Naive thymus-derived CD4-positive, alpha-beta T cell (primary cell): ENCODE measurements at regions of chr5 and their contacts with region 1.

Region 1: GRCh38 chr5:172958331-172959046 is 735 bp upstream of the RPL26L1 start:
- DNase-seq: peak in 7 of 9 donors; percentile 13 to 76 (median 57)
- ATAC-seq: peak; percentile 84
- H3K4me3 ChIP-seq: peak overlapping the region; percentile 90
- H3K4me3 Mint-ChIP-seq: peak overlapping the region; percentile 88 to 98 (median 97)
- H3K27ac ChIP-seq: peak overlapping the region; percentile 95
- H3K27ac Mint-ChIP-seq: peak overlapping the region; percentile 94 to 99 (median 98)
- H3K4me1 ChIP-seq: peaks cover 9 to 10% of the 10 kb centered on the region in 2 donors
- H3K4me1 Mint-ChIP-seq: peaks cover 18 to 45% (median 37%) of the 10 kb centered on the region in 7 donors
- H3K27me3 ChIP-seq: no peaks in the 10 kb centered on the region
- H3K27me3 Mint-ChIP-seq: peaks cover 0 to 4% (median 0%) of the 10 kb centered on the region in 5 donors

Region 2: GRCh38 chr5:172179361-172179989 is 779.0 kb before region 1 on chr5:
- CTCF ChIA-PET with region 1: no interaction called
- POLR2A ChIA-PET with region 1: no interaction called
- intact Hi-C with region 1: loop called in 1 of 2 experiments (anchors 2 kb)
- DNase-seq: peak in 8 of 9 donors; percentile 40 to 68 (median 50)
- ATAC-seq: peak; percentile 8
- H3K4me3 ChIP-seq: peak overlapping the region; percentile 76
- H3K4me3 Mint-ChIP-seq: peak overlapping the region; percentile 78 to 99 (median 90)
- H3K27ac ChIP-seq: peak overlapping the region; percentile 92
- H3K27ac Mint-ChIP-seq: peak overlapping the region; percentile 94 to 100 (median 98)
- H3K4me1 ChIP-seq: peaks cover 86 to 87% of the 10 kb centered on the region in 2 donors
- H3K4me1 Mint-ChIP-seq: peaks cover 48 to 95% (median 84%) of the 10 kb centered on the region in 7 donors
- H3K27me3 ChIP-seq: no peaks in the 10 kb centered on the region
- H3K27me3 Mint-ChIP-seq: no peaks in the 10 kb centered on the region

Region 3: DNA sequence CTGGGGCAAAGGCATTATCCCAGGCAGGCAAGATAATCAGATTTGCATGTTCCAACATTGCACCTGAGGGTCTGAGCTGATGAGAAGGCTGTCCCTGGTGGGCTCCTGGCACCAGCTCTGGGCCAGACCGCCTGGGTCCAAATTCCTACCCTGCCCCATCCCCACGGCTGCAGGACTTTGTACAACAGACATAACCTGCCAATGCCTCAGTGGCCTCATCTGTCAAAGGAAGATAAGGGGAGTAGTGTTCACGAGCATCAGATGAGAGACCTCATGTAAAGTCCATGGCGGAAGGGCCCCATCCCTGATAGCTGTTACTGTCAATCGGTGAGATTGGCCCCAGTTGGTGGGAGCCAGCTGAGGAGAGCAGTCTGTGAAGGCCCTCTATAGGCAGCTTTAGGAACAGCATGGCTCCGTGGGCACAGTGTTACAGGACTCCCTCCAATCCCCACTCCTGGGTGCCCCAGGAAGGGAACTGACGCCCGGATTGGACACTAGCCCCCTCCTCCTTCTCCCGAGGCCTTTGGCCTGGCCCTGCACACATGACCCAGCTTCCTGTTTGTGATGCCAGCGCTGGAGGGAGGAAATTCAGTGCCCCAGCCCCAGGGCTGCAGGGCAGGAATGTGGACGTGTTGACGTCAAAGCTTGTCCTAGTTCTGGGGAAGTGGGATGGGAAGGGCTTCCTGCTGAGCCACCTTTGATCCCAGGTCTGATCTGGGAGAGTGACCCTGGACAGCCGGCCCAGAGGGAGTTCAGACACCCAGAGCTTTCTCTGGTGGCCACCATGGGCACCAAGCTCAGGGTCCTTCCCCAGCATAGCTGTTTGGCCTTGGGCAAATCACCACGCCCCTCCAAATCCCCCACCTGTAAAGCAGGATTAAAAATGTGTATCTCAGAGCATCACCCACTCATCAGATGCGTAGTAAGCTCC is 243.7 kb before region 1 on chr5:
- CTCF ChIA-PET with region 1: interaction called, 4 read pairs
- POLR2A ChIA-PET with region 1: no interaction called
- intact Hi-C with region 1: loop called (anchors 1 kb)
- DNase-seq: peak; percentile 38 to 65 (median 57)
- ATAC-seq: peak; percentile 85
- H3K4me3 ChIP-seq: no peak overlapping the region
- H3K4me3 Mint-ChIP-seq: no peak overlapping the region
- H3K27ac ChIP-seq: no peak overlapping the region
- H3K27ac Mint-ChIP-seq: peak overlapping the region in 4 of 9 donors; percentile 17 to 72 (median 38)
- H3K4me1 ChIP-seq: peaks cover 0 to 7% of the 10 kb centered on the region in 2 donors
- H3K4me1 Mint-ChIP-seq: peaks cover 0 to 8% (median 5%) of the 10 kb centered on the region in 7 donors
- H3K27me3 ChIP-seq: no peaks in the 10 kb centered on the region
- H3K27me3 Mint-ChIP-seq: peaks cover 0 to 18% (median 11%) of the 10 kb centered on the region in 5 donors

Region 4: GRCh38 chr5:172806897-172807672 is 151.4 kb before region 1 on chr5:
- CTCF ChIA-PET with region 1: no interaction called
- POLR2A ChIA-PET with region 1: no interaction called
- intact Hi-C with region 1: loop called in 1 of 2 experiments (anchors 1 kb)
- DNase-seq: peak; percentile 24 to 78 (median 52)
- ATAC-seq: peak; percentile 98
- H3K4me3 ChIP-seq: peak overlapping the region; percentile 45
- H3K4me3 Mint-ChIP-seq: peak overlapping the region; percentile 73 to 87 (median 84)
- H3K27ac ChIP-seq: peak overlapping the region; percentile 74
- H3K27ac Mint-ChIP-seq: peak overlapping the region; percentile 86 to 98 (median 93)
- H3K4me1 ChIP-seq: peaks cover 0 to 12% of the 10 kb centered on the region in 2 donors
- H3K4me1 Mint-ChIP-seq: peaks cover 9 to 17% (median 13%) of the 10 kb centered on the region in 7 donors
- H3K27me3 ChIP-seq: no peaks in the 10 kb centered on the region
- H3K27me3 Mint-ChIP-seq: peaks cover 0 to 2% (median 0%) of the 10 kb centered on the region in 5 donors

Region 5: DNA sequence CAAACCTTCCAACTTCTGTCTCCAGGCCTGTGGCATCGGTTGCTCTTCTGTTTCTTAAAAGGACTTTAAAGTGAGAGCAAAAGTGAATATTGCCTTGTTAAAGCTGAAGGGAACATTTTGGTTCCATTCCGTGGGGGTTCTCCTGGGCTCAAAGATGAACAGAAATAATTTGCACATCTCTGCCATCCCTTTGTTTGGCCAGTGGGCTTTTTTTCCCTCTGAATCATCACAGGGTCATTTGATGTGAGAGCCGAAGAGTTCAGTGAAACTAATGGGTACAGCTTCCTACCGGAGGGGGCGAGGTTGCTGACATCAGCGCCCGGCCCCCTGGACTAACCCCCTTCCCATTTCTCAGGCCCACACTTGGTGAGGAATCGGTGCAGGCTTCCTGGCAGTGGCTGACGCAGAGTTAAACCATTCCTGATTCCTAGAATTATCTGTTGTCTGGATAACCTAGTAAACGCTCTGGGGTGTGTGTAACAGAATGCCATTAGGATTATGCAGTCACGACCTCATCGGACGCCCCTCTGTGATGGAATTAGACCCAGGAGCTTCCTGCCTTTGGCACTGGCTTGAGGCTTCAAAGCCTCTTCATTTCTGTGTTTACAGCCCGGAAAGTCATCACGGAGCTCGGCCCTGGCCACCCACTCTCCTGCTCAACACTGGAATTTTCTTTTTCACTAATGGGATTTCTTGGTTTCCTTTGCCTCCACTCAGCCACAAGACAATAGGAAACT is 60.8 kb before region 1 on chr5:
- CTCF ChIA-PET with region 1: no interaction called
- POLR2A ChIA-PET with region 1: no interaction called
- intact Hi-C with region 1: no loop called
- DNase-seq: no peak
- ATAC-seq: peak; percentile 32
- H3K4me3 ChIP-seq: no peak overlapping the region
- H3K4me3 Mint-ChIP-seq: peak overlapping the region in 2 of 10 donors; percentile 57 to 67
- H3K27ac ChIP-seq: no peak overlapping the region
- H3K27ac Mint-ChIP-seq: peak overlapping the region in 3 of 9 donors; percentile 45 to 84 (median 83)
- H3K4me1 ChIP-seq: no peaks in the 10 kb centered on the region
- H3K4me1 Mint-ChIP-seq: peaks cover 0 to 9% (median 0%) of the 10 kb centered on the region in 7 donors
- H3K27me3 ChIP-seq: no peaks in the 10 kb centered on the region
- H3K27me3 Mint-ChIP-seq: no peaks in the 10 kb centered on the region

Region 6: DNA sequence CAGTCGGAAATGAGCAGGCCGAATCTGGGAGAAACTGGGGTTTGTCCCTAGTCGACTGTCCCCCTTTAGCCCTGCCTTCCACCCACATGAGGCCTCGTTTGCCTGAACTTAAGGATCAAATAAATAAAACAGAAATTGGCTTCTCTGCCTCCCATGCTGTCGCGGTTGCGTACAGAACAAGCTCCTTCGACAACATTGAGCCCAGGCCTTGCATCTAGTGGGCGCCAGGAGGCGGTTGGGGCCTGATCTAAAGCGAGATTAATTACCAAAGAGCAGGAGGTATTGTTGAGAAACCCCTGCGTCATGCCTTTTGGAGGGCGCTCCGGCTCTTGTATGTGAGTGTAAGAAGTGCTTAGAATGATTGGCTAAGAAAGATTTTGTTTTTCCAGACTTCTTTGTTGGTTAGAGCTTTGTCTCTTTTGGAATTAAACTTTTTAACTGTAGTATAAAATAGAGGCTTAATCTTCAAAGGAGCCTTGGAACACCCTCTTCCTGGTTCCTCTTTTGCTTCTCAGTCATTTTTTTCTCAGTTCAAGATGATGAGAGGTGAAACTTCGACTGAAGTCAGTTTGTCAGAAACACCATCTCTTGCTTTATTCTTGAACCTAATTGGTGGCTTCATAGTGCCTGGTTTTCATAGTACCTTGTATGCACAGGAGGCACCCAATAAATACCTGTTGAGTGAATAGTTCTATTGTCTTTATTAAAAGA is 25.9 kb after region 1 on chr5:
- CTCF ChIA-PET with region 1: interaction called, 8 read pairs
- POLR2A ChIA-PET with region 1: interaction called, 15 read pairs
- intact Hi-C with region 1: loop called (anchors 1 kb)
- DNase-seq: peak; percentile 47 to 90 (median 82)
- ATAC-seq: peak; percentile 86
- H3K4me3 ChIP-seq: peak overlapping the region; percentile 64
- H3K4me3 Mint-ChIP-seq: peak overlapping the region; percentile 88 to 99 (median 97)
- H3K27ac ChIP-seq: peak overlapping the region; percentile 92
- H3K27ac Mint-ChIP-seq: peak overlapping the region; percentile 92 to 99 (median 98)
- H3K4me1 ChIP-seq: peaks cover 16 to 26% of the 10 kb centered on the region in 2 donors
- H3K4me1 Mint-ChIP-seq: peaks cover 20 to 71% (median 48%) of the 10 kb centered on the region in 7 donors
- H3K27me3 ChIP-seq: no peaks in the 10 kb centered on the region
- H3K27me3 Mint-ChIP-seq: no peaks in the 10 kb centered on the region

Region 7: GRCh38 chr5:173331956-173332479 is 373.5 kb after region 1 on chr5:
- CTCF ChIA-PET with region 1: no interaction called
- POLR2A ChIA-PET with region 1: no interaction called
- intact Hi-C with region 1: loop called in 1 of 2 experiments (anchors 1 kb)
- DNase-seq: peak; percentile 29 to 92 (median 59)
- ATAC-seq: peak; percentile 96
- H3K4me3 ChIP-seq: no peak overlapping the region
- H3K4me3 Mint-ChIP-seq: peak overlapping the region in 2 of 10 donors; percentile 10 to 48
- H3K27ac ChIP-seq: no peak overlapping the region
- H3K27ac Mint-ChIP-seq: peak overlapping the region in 1 of 9 donors; percentile 62
- H3K4me1 ChIP-seq: no peaks in the 10 kb centered on the region
- H3K4me1 Mint-ChIP-seq: peaks cover 10 to 33% (median 17%) of the 10 kb centered on the region in 7 donors
- H3K27me3 ChIP-seq: peaks cover 0 to 3% of the 10 kb centered on the region in 2 donors
- H3K27me3 Mint-ChIP-seq: peaks cover 7 to 71% (median 68%) of the 10 kb centered on the region in 5 donors